CD4-positive, alpha-beta memory T cell (primary cell): ENCODE measurements at regions of chr1 and their contacts with region 1.

Region 1: DNA sequence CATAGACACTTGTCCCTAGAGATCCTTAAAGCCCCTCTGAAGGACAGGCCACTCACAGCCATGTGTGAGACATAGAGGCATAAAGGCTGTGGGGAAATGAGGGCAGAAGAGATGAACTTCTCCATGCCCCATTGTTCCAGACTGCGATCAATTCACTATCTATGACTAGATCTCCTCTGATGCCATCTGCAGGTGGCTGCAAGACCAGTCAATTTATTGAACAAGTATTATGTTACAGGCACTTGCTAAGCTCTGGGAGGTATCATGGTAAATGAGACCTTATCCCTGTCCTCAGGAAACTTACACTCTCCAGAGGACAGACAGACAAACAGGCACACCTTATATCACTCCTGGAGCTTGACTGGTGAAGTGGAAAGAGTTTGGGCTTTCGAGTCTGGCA is 22.9 kb downstream of the UBIAD1 start:
- DNase-seq: peak in 1 of 5 donors; percentile 28
- H3K4me3 ChIP-seq: no peak overlapping the region
- H3K4me3 Mint-ChIP-seq: peak overlapping the region in 1 of 8 donors; percentile 29
- H3K27ac ChIP-seq: no peak overlapping the region
- H3K27ac Mint-ChIP-seq: peak overlapping the region; percentile 68 to 93 (median 84)
- H3K4me1 ChIP-seq: peaks cover 52% of the 10 kb centered on the region
- H3K4me1 Mint-ChIP-seq: peaks cover 31 to 54% (median 49%) of the 10 kb centered on the region in 4 donors
- H3K27me3 ChIP-seq: no peaks in the 10 kb centered on the region
- H3K27me3 Mint-ChIP-seq: no peaks in the 10 kb centered on the region

Region 2: DNA sequence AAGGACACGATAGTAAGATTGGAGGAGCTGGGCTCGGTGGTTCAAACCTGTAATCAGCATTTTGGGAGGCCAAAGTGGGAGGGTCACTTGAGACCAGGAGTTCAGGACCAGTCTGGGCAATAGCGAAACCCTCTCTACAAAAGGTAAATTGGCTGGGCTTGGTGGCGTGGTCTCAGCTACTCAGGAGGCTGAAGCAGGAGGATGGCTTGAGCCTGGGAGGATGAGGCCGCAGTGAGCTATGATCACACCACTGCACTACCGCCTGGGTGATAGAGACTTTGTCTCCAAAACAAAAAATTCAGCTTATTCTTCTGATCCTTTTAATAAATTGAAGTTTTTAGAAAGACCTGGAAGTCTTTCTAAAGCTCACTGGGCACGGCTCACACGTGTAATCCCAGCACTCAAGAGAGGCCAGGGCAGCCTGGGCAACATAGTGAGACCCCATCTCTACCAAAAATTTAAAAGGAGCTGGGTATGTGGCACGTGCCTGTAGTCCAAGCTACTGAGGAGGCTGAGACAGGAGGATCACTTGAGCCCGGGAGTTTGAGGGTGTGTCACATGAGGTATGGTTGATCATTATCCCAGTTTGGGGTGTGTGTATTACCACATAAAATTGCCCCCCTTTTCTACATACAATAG is 264.2 kb before region 1 on chr1:
- CTCF ChIA-PET with region 1: no interaction called
- POLR2A ChIA-PET with region 1: no interaction called
- intact Hi-C with region 1: no loop called
- DNase-seq: no peak
- H3K4me3 ChIP-seq: no peak overlapping the region
- H3K4me3 Mint-ChIP-seq: peak overlapping the region in 1 of 8 donors; percentile 10
- H3K27ac ChIP-seq: no peak overlapping the region
- H3K27ac Mint-ChIP-seq: no peak overlapping the region
- H3K4me1 ChIP-seq: no peaks in the 10 kb centered on the region
- H3K4me1 Mint-ChIP-seq: peaks cover 0 to 3% (median 3%) of the 10 kb centered on the region in 4 donors
- H3K27me3 ChIP-seq: no peaks in the 10 kb centered on the region
- H3K27me3 Mint-ChIP-seq: peaks cover 0 to 2% of the 10 kb centered on the region in 2 donors

Region 3: DNA sequence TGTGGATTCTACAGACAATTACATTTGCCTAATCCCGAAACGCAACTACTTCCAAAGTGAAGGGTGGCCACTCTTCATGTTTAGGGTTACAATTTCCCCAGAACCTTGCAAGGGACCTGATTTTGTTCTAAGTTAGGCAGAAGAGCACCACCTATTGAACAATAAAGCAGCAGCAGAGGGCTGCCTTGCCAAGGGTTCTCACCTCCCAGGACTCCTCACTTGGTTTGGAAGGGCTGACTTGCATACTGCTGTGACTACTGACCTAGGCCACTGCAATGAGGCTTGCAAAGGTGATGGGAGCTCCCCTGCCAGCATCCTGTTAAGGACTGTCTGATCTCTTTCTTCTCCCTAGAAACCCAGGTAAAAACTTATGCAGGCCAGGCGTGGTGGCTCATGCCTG is 47.8 kb before region 1 on chr1:
- CTCF ChIA-PET with region 1: interaction called, 25 read pairs
- POLR2A ChIA-PET with region 1: no interaction called
- intact Hi-C with region 1: no loop called
- DNase-seq: no peak
- H3K4me3 ChIP-seq: no peak overlapping the region
- H3K4me3 Mint-ChIP-seq: no peak overlapping the region
- H3K27ac ChIP-seq: no peak overlapping the region
- H3K27ac Mint-ChIP-seq: peak overlapping the region in 6 of 7 donors; percentile 50 to 85 (median 72)
- H3K4me1 ChIP-seq: peaks cover 38% of the 10 kb centered on the region
- H3K4me1 Mint-ChIP-seq: peaks cover 19 to 32% (median 23%) of the 10 kb centered on the region in 4 donors
- H3K27me3 ChIP-seq: no peaks in the 10 kb centered on the region
- H3K27me3 Mint-ChIP-seq: no peaks in the 10 kb centered on the region

Region 4: DNA sequence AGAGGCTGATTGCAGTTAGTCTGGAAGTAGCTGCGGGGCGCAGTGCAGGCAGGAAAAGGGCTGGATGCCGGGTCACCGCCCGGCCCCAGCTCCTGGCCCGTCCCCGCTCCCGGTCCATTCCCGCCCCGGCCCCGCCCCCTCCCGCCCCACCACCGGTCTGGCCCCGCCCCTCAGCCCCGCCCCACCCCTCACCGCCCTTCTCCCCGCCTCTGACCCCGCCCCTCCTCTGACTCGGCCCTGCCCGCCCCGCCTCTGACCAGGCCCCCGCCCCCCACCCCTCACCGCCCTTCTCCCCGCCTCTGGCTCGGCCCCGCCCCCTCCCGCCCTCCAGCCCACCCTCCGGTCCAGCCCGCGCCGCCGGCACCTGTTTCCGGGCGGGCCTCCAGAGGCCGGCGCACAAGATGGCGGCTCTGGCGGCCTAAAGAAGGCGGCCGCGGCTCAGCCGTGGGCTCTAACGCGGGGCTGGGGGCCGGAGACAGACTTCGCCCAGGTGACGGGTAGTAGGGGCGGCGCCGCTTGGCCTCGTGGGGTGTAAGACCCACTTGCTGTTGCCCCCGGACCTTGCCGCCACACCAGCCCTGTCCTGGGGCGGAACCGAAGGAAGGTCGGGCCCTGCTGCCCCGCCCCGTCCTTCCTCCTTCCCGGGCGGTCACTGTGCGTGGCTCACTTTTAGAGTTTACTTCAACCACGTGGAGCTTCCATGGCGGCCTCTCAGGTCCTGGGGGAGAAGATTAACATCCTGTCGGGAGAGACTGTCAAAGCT is 22.9 kb before region 1 on chr1 and contains the start of gene UBIAD1:
- CTCF ChIA-PET with region 1: no interaction called
- POLR2A ChIA-PET with region 1: interaction called, 13 read pairs
- intact Hi-C with region 1: no loop called
- DNase-seq: peak; percentile 75 to 83 (median 80)
- H3K4me3 ChIP-seq: peak within 1 kb of the TSS; percentile 90 to 99
- H3K4me3 Mint-ChIP-seq: peak within 1 kb of the TSS; percentile 91 to 98 (median 95)
- H3K27ac ChIP-seq: peak within 1 kb of the TSS; percentile 88
- H3K27ac Mint-ChIP-seq: peak within 1 kb of the TSS; percentile 86 to 97 (median 95)
- H3K4me1 ChIP-seq: peaks cover 41% of the 10 kb centered on the region
- H3K4me1 Mint-ChIP-seq: peaks cover 21 to 40% (median 30%) of the 10 kb centered on the region in 4 donors
- H3K27me3 ChIP-seq: no peaks in the 10 kb centered on the region
- H3K27me3 Mint-ChIP-seq: no peaks in the 10 kb centered on the region
- total RNA-seq, gene UBIAD1: 30.3 to 33.0 TPM

Region 5: GRCh38 chr1:11448375-11449099 is 152.6 kb after region 1 on chr1:
- CTCF ChIA-PET with region 1: no interaction called
- POLR2A ChIA-PET with region 1: no interaction called
- intact Hi-C with region 1: no loop called
- DNase-seq: no peak
- H3K4me3 ChIP-seq: no peak overlapping the region
- H3K4me3 Mint-ChIP-seq: no peak overlapping the region
- H3K27ac ChIP-seq: no peak overlapping the region
- H3K27ac Mint-ChIP-seq: no peak overlapping the region
- H3K4me1 ChIP-seq: no peaks in the 10 kb centered on the region
- H3K4me1 Mint-ChIP-seq: peaks cover 0 to 2% (median 0%) of the 10 kb centered on the region in 4 donors
- H3K27me3 ChIP-seq: no peaks in the 10 kb centered on the region
- H3K27me3 Mint-ChIP-seq: peaks cover 6% of the 10 kb centered on the region in 2 donors